Activated T-helper 1 cell treated with anti-CD3 and anti-CD28 coated beads, Interleukin-12 subunit alpha, Interleukin-12 subunit beta, Interleukin-2, Interleukin-4 antibody, amounts not matched to agents 30 ng/mL and 10 ng/mL and 1 ng/mL, durations not matched to agents 14 hours and 24 hours and 36 hours (primary cell): ENCODE measurements at regions of chr1 and their contacts with region 1.

Region 1: GRCh38 chr1:109643385-109644230 is 12.3 kb upstream of the GSTM4 start:
- DNase-seq: peak; percentile 82
- H3K4me3 Mint-ChIP-seq: no peak overlapping the region
- H3K27ac Mint-ChIP-seq: no peak overlapping the region
- H3K4me1 Mint-ChIP-seq: peaks cover 14% of the 10 kb centered on the region
- H3K27me3 Mint-ChIP-seq: peaks cover 5% of the 10 kb centered on the region

Region 2: DNA sequence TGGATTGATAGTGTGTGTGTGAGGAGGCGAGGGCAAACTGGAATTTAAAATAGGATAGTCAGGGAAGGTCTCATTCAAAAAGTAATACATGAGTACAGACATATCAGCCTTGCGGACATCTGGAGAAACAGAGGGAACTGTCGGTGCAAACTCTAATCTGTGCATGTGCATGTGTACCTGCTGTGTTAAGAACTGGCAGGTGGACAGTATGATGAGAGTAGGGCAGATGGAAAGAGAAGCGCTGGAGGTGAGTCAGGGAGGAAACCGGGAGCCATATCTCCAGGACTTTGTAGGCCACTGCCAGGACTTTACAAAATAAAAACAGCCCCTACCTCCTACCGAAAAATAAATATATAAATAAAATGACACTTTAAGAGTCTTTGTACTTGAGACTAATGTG is 305.5 kb before region 1 on chr1:
- intact Hi-C with region 1: no loop called
- DNase-seq: no peak
- H3K4me3 Mint-ChIP-seq: no peak overlapping the region
- H3K27ac Mint-ChIP-seq: no peak overlapping the region
- H3K4me1 Mint-ChIP-seq: no peaks in the 10 kb centered on the region
- H3K27me3 Mint-ChIP-seq: peaks cover 4% of the 10 kb centered on the region

Region 3: DNA sequence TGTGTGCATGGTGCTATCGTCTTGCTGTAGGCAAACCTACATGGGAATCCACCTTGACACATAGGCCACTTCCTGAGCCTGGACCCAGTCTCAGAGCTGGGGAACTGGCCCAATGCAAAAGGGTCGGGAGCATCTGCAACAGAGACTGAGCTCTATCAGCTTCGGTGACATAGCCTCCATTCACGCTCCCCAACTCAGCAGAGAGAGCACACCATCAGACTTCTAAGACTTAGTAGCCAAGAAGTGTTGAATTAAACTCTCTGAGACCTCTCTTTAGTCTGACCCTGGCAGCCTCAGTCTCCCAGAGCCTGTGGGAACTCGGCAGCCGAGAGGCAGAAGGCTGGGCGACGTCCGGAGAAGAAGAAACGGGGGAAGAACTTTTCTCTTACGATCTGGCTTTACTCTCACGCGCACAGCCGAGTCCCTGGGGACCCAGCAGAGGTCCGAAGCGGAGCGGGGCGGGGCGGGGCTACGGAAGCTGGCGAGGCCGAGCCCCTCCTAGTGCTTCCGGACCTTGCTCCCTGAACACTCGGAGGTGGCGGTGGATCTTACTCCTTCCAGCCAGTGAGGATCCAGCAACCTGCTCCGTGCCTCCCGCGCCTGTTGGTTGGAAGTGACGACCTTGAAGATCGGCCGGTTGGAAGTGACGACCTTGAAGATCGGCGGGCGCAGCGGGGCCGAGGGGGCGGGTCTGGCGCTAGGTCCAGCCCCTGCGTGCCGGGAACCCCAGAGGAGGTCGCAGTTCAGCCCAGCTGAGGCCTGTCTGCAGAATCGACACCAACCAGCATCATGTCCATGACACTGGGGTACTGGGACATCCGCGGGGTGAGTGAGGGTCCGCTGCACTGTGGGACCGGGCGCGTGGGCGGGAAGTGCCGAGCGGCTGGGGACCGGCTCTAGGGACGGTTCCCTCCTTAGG is 12.3 kb after region 1 on chr1 and contains the start of gene GSTM4:
- intact Hi-C with region 1: loop called (anchors 1 kb)
- DNase-seq: peak; percentile 56
- H3K4me3 Mint-ChIP-seq: peak within 1 kb of the TSS; percentile 95
- H3K27ac Mint-ChIP-seq: peak within 1 kb of the TSS; percentile 92
- H3K4me1 Mint-ChIP-seq: peaks cover 15% of the 10 kb centered on the region
- H3K27me3 Mint-ChIP-seq: peaks cover 19% of the 10 kb centered on the region
- total RNA-seq, gene GSTM4: 6.5 and 8.9 TPM in 2 replicates

Region 4: GRCh38 chr1:109687616-109688499 is 44.2 kb after region 1 on chr1 and contains the start of gene GSTM1:
- intact Hi-C with region 1: loop called (anchors 2 kb)
- DNase-seq: peak; percentile 86
- H3K4me3 Mint-ChIP-seq: peak within 1 kb of the TSS; percentile 93
- H3K27ac Mint-ChIP-seq: peak within 1 kb of the TSS; percentile 98
- H3K4me1 Mint-ChIP-seq: peaks cover 20% of the 10 kb centered on the region
- H3K27me3 Mint-ChIP-seq: peaks cover 4% of the 10 kb centered on the region
- total RNA-seq, gene GSTM1: 77.4 and 86.4 TPM in 2 replicates

Region 5: GRCh38 chr1:109739738-109740660 is 96.4 kb after region 1 on chr1:
- intact Hi-C with region 1: loop called (anchors 1 kb)
- DNase-seq: peak; percentile 79
- H3K4me3 Mint-ChIP-seq: peak overlapping the region; percentile 77
- H3K27ac Mint-ChIP-seq: peak overlapping the region; percentile 47
- H3K4me1 Mint-ChIP-seq: peaks cover 14% of the 10 kb centered on the region
- H3K27me3 Mint-ChIP-seq: peaks cover 27% of the 10 kb centered on the region

Region 6: DNA sequence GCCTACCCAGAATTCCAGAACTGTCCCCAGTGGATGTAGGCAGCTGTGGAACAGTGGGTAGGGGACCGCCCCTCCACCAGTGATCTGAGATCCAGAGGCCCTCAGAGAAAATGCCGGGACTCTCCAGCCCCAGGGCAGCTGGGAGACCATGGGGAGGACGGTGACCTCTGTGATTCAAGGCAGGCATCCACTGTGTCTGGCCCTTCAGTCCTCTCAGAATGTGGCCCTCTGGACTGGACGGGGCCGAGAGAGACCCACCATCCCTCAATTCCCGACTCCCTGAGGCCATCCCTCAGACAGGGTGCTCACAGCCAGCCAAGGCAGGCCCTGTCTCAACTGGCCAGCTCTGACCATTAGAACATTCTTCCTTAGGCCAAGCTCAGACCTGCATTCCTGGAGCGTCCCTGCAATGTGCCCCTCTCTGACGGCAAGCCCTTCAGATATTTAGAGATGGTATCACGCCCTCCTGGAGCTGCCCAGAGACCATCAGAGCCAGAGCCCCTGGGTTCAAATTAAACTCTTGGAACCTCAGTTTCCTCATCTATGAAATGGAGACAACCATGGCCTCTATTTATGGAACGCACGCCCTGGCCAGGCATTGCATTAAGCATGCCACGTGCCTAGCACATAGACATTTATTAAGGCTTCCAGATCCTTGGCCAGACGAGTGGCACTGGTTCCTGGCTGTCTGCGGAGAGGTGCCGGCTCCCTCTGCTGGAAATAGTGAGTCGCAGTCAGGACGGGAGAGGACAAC is 129.7 kb after region 1 on chr1:
- intact Hi-C with region 1: loop called (anchors 1 kb)
- DNase-seq: peak; percentile 65
- H3K4me3 Mint-ChIP-seq: no peak overlapping the region
- H3K27ac Mint-ChIP-seq: peak overlapping the region; percentile 15
- H3K4me1 Mint-ChIP-seq: peaks cover 23% of the 10 kb centered on the region
- H3K27me3 Mint-ChIP-seq: peaks cover 9% of the 10 kb centered on the region

Region 7: GRCh38 chr1:110011527-110012041 is 368.0 kb after region 1 on chr1:
- intact Hi-C with region 1: loop called (anchors 1 kb)
- DNase-seq: peak; percentile 35
- H3K4me3 Mint-ChIP-seq: no peak overlapping the region
- H3K27ac Mint-ChIP-seq: no peak overlapping the region
- H3K4me1 Mint-ChIP-seq: peaks cover 5% of the 10 kb centered on the region
- H3K27me3 Mint-ChIP-seq: no peaks in the 10 kb centered on the region